ENCODE measurements at regions of chr2 and their contacts with region 1.

Region 1: DNA sequence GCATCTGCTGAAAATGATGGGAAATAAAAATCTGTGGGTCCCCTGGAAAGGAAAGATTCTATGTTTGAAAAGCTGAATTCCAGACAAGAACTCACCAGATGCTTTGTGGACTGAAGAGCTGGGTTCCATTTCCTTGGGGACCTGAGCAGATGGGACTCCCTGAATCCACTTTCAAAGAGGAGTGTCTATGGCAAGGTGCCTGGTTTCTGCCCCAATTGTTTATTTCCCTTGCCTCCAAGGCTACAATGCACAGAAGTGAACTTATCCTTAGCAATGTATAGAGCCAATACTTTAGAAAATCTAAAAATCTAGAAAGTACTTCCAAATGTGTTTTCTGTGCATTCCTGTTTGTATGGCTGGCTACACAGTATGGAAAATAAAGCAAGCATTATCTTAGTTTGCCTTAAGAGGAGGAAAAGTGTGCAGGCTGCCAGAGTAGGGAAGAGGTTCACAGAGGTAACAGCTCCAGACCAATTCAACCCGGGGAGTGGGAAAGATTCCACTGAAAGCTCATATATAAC is 420.5 kb downstream of the NRXN1 start:
- DNase-seq: no peak
- ATAC-seq: no peak

Region 2: GRCh38 chr2:49656853-49657252 is 954.6 kb before region 1 on chr2:
- intact Hi-C with region 1: loop called (anchors 10 kb)
- DNase-seq: no peak
- ATAC-seq: no peak